SK-MEL-5 (cell line): ENCODE measurements at regions of chr13 and their contacts with region 1.

Region 1: DNA sequence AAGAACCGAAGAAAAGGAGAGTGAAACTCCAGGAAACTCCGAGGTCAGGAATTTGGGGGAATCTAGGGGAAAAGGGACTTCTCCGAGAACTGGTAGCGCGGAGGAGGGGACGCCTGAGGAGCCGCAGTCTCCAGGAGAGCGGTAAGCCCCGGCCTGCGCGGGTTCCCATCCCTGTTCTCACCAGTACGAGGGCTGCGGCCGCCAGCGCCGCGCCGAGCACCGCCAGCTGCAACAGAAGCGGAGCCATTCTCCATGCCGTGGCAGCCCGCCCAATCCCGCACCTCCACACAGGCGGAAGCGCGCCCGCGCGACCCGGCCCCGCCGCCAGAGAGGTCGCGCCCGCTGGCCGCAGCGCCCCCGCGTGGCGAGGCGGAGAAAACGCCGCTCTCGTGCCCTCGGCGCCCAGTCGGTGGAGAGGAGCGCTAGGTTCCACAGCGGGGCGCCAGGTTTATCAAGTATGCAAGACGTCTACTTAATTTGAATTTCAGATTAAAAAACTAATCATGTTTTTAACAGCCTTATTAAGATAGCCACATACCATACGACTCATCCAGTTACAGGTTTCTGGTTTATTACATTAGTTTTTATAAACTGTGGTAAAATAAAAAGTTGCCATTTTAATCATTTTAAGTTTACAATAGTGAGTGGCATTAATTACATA is at the start of gene ALG5:
- DNase-seq: peak; percentile 85
- total RNA-seq, gene ALG5: 68.6 and 81.3 TPM in 2 replicates

Region 2: GRCh38 chr13:36815062-36815461 is 184.1 kb before region 1 on chr13:
- in situ Hi-C with region 1: no loop called
- DNase-seq: peak; percentile 53

Region 3: DNA sequence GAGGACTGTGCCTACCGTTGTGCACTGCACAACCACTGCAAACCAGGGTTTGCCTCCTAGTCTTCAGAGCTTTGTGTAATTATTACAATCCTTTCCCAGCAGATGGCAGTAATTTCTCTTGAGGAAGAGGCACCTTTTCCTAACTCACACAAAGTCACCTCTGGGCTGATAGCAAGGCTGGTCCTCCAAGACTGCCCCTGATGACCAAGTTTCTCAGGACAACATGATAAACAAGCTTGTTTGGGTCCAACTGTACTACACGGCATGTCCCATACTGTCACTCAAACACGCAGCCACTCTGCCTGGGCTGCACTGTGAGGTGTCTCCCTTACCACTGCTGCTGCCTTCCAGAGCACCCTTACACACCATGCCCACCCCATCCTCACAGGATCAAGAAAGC is 140.9 kb before region 1 on chr13:
- in situ Hi-C with region 1: loop called (anchors 25 kb)
- DNase-seq: peak; percentile 82